K562 (cell line): ENCODE measurements at regions of chr10 and their contacts with region 1.

Region 1: DNA sequence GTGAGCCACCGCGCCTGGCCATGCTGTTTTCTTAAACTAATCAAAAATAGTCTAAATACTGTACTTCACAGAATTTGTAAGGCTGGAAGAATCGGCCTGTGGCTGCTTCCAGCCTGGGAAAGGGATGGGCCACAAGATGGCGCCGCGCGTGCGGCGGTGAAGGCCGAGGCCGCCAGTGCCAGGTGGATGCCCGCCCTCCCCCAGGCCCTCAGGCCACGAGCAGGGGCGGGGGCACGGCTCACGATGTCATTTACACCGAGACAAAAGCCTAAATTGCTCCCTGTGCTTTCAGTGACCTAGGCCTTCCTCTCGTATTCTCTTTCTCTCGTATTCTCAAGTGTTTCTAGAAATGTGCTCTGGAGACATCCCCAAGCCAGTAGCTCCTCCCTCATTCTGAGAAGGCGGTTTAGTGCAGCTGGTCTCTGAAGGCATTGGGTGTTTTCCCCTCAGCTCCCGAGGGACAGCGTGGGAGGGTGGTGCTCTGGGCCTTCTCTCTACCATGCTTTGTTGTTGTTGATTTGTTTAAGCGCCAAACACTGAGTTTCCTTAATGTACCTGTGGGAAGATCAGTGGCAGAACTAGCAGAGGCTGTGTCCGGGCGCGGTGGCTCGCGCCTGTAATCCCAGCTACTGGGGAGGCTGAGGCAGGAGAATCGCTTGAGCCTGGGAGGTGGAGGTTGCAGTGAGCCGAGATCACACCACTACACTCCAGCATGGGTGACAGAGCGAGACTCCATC is 68.4 kb downstream of the CDC123 start:
- DNase-seq: peak; percentile 75 to 82 (median 78)
- ATAC-seq: peak; percentile 89
- H3K4me3 ChIP-seq: peak overlapping the region; percentile 19; the same call in 1 of the 2 replicates
- H3K27ac ChIP-seq: peak overlapping the region; percentile 50; the same call in 2 of the 3 replicates
- H3K4me1 ChIP-seq: peaks cover 18 to 20% of the 10 kb centered on the region in 2 experiments; a peak in 4 of 5 replicates
- H3K27me3 ChIP-seq: no peaks in the 10 kb centered on the region
- CTCF ChIP-seq: peak; percentile 79 to 86 (median 84)
- EP300 ChIP-seq: no peak
- POLR2A ChIP-seq: no peak
- RAD21 ChIP-seq: peak; percentile 92 to 96

Region 2: DNA sequence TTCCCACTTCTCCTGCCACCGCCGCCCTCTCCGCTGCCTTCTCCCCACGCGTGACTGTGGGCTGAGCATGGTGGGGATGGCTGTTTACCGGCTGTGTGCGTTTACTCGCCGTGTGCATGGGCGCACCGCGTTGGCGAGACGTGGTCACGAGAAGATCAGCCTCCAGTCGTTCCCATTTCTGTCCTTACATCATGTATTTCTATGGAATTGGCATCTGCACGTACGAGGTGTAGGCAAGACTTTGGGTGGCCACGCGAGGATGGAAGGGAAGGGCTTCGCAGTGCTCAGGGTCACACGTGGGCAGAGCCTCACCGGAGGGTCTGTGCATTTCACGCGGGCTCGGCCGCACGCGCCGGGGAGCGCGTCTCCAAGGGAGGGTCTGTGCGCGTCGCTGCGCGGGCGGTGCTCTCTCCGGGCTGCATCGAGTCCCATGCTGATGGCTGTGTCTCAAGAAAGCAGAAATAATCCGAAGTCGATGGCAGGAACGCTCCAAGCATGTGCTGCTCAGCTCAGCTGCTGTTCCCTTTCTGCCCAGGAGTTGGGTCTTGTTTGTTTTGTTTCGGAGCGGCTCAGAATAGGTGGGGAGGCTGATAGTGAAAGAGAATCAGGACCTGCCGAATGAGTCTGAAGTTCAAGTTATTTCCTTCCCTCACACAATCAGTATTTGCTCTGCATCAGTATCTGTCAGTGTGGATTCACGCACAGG is 85.9 kb after region 1 on chr10:
- CTCF ChIA-PET with region 1: no interaction called
- POLR2A ChIA-PET with region 1: no interaction called
- in situ Hi-C with region 1: no loop called
- intact Hi-C with region 1: loop called (anchors 10 kb)
- DNase-seq: no peak
- ATAC-seq: no peak
- H3K4me3 ChIP-seq: no peak overlapping the region
- H3K27ac ChIP-seq: no peak overlapping the region
- H3K4me1 ChIP-seq: peaks cover 0 to 23% of the 10 kb centered on the region in 2 experiments; a peak in 2 of 5 replicates
- H3K27me3 ChIP-seq: peaks cover 38 to 62% of the 10 kb centered on the region in 2 experiments
- CTCF ChIP-seq: no peak
- EP300 ChIP-seq: no peak
- POLR2A ChIP-seq: no peak
- RAD21 ChIP-seq: no peak

Region 3: DNA sequence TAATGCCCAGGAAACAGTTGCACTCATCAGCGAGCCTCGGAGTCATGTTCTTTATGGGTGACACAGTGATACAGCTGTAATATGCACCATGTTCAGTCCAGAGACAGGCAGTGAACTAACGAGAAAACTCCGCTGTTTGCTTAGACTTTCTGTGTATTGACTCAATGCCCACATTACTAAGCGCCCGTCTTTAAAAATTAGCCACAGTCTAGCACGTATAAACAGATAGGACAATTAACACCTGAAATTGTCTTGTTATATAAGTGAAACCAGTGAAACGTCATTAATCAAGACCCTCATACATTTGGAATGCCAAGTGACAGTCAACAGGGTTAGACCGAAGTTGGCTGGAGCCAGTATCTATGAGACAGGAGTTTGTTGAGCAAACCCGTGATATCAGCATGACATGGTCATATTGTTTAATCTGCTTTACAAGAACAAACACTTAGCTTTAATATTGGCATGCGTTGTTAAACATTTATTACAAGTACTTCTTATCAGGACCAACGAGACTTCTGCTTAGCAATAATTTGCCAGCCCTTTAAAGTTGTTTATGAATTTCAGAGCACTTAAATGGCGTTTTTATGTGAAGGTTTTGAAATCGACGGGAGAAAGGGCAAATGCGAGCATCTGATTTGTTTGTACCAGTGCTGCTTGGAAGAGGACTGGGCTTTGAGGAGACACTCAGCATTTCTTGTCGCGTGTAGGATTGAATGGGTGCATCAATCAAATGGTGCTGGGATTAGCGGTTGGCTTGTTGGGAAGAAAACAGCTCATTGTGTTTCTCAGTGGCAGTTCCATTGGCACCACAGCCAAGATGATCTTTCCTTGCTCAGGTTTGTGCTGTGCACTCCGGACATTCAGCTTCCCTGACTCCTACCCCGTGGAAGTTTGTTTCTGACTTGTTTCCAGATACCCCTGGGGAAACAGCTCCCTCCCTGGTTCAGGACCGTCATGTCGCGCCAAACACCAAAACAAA is 141.3 kb after region 1 on chr10:
- CTCF ChIA-PET with region 1: no interaction called
- POLR2A ChIA-PET with region 1: no interaction called
- in situ Hi-C with region 1: no loop called
- intact Hi-C with region 1: loop called (anchors 10 kb)
- DNase-seq: no peak
- ATAC-seq: no peak
- H3K4me3 ChIP-seq: no peak overlapping the region
- H3K27ac ChIP-seq: no peak overlapping the region
- H3K4me1 ChIP-seq: no peaks in the 10 kb centered on the region; a peak in 1 of 5 replicates
- H3K27me3 ChIP-seq: peaks cover 33 to 51% of the 10 kb centered on the region in 2 experiments
- CTCF ChIP-seq: 0 out of 6 replicates have a peak, but pooled peaks of 1 of the 3 experiments have one; percentile 10
- EP300 ChIP-seq: no peak
- POLR2A ChIP-seq: no peak
- RAD21 ChIP-seq: no peak

Region 4: DNA sequence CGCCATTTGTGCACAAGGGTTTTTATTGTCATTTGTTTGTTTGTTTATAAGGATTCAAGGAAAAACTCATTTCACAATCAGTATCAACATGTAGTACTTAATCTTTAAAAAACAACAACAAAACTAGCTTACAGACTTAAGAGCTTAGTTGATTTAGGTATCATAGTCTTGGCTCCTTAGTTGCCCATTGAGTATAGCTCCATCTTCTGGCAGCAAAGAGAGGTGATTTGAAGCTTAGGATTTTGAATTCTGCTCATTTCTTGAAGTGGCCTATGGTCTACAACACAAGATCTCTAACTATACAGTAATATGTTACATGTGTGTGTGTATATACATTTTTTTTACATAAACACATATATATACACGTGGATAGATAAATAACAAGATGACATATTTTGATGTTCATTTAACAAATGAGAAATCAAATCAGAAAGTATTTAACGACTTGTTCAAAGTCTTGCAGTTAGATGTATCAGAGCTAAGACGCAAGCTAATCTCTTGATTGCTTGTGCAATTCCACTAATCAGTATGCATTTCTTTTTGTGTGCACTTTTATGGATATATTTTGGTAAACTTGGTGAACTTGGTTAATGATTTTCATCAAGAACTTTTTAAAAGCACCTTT is 392.3 kb after region 1 on chr10:
- CTCF ChIA-PET with region 1: interaction called, 6 read pairs
- POLR2A ChIA-PET with region 1: no interaction called
- in situ Hi-C with region 1: no loop called
- intact Hi-C with region 1: loop called (anchors 1 kb)
- DNase-seq: peak; percentile 30 to 37 (median 35)
- ATAC-seq: peak; percentile 76
- H3K4me3 ChIP-seq: no peak overlapping the region
- H3K27ac ChIP-seq: no peak overlapping the region
- H3K4me1 ChIP-seq: no peaks in the 10 kb centered on the region
- H3K27me3 ChIP-seq: peaks cover 0 to 4% of the 10 kb centered on the region in 2 experiments; a peak in 1 of 5 replicates
- CTCF ChIP-seq: peak; percentile 33 to 78 (median 49); a peak in 5 of 6 replicates
- EP300 ChIP-seq: no peak
- POLR2A ChIP-seq: no peak
- RAD21 ChIP-seq: peak; percentile 47 to 77; a peak in 3 of 4 replicates

Region 5: GRCh38 chr10:12710594-12711349 is 446.4 kb after region 1 on chr10:
- CTCF ChIA-PET with region 1: no interaction called
- POLR2A ChIA-PET with region 1: no interaction called
- in situ Hi-C with region 1: loop called (anchors 5 kb)
- intact Hi-C with region 1: loop called (anchors 2 kb)
- DNase-seq: peak; percentile 62 to 75 (median 64)
- ATAC-seq: peak; percentile 90
- H3K4me3 ChIP-seq: no peak overlapping the region
- H3K27ac ChIP-seq: no peak overlapping the region
- H3K4me1 ChIP-seq: no peaks in the 10 kb centered on the region
- H3K27me3 ChIP-seq: peaks cover 0 to 4% of the 10 kb centered on the region in 2 experiments; a peak in 2 of 5 replicates
- CTCF ChIP-seq: peak; percentile 80 to 92 (median 89)
- EP300 ChIP-seq: peak; percentile 10; the same call in 1 of the 2 replicates
- POLR2A ChIP-seq: no peak
- RAD21 ChIP-seq: peak; percentile 75 to 81

Region 6: GRCh38 chr10:13087986-13088618 is 823.7 kb after region 1 on chr10:
- CTCF ChIA-PET with region 1: no interaction called
- POLR2A ChIA-PET with region 1: no interaction called
- in situ Hi-C with region 1: loop called (anchors 10 kb)
- intact Hi-C with region 1: no loop called
- DNase-seq: no peak
- ATAC-seq: no peak; the same call in 2 of the 3 replicates
- H3K4me3 ChIP-seq: no peak overlapping the region
- H3K27ac ChIP-seq: no peak overlapping the region
- H3K4me1 ChIP-seq: peaks cover 4 to 13% of the 10 kb centered on the region in 2 experiments; a peak in 2 of 5 replicates
- H3K27me3 ChIP-seq: peaks cover 10 to 13% of the 10 kb centered on the region in 2 experiments; a peak in 4 of 5 replicates
- CTCF ChIP-seq: no peak
- EP300 ChIP-seq: no peak
- POLR2A ChIP-seq: no peak
- RAD21 ChIP-seq: no peak